ENCODE measurements at regions of chr12 and their contacts with region 1.

Region 1: DNA sequence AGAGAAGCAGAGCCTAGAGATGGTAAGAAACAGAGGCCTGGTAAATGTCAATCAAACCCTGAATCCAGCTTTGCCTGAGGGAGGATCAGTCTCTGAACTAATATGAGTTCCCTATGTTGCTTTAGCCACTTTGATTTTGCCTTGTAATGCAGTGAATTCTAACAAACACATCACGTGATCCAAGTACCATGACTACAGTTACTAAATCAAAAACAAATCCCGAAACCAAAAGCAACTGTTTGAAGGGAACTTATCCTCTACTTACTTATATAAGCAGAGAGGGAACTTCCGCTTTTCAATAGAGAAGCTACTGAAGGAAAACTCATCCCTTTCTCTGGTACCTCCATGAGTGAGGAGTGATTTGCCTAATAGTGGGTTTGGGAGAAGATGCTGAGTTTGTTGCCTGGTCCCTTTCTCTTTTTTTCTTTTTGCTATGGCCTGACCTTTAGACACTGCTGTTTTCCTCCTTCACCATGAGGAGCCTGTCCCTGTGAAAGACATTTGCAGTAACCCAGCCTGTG is 7.7 kb upstream of the PPTC7 start:
- DNase-seq: no peak
- H3K4me3 Mint-ChIP-seq: no peak overlapping the region
- H3K27ac Mint-ChIP-seq: peak overlapping the region; percentile 10
- H3K4me1 Mint-ChIP-seq: peaks cover 8% of the 10 kb centered on the region
- H3K27me3 Mint-ChIP-seq: no peaks in the 10 kb centered on the region
- CTCF ChIP-seq: no peak

Region 2: DNA sequence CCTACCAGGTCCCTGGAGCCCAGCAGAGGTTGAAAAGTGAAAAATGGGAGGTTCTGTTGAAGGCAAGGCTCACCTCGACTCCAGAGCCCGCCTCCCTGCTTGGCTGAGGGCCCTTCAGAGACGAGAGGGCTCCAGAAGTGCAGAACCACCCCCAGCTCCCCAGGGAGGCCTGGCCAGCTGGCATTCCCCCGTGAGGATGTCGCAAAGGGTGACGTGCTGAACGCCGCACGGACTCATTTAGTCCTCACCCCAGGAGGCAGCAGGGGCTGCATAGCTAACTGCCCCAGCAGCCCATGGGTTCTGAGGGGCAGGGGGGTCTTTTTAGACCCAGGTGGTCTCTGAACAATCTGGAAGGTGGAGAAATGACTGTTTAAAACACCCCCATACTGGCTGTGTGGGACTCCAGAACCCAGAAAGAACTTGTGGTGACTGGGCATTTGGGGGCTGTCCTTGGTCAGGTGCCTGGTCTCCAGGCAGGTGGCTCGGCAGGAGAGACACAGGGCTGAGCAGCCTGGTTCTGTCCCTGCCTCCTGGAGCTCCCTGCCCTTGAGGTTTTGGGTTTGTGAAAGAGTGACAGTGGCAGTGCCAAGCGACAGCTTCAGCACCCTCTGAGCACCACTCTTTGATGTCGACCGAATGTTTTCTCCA is 219.3 kb before region 1 on chr12:
- CTCF ChIA-PET with region 1: no interaction called
- POLR2A ChIA-PET with region 1: no interaction called
- intact Hi-C with region 1: no loop called
- DNase-seq: no peak
- H3K4me3 Mint-ChIP-seq: no peak overlapping the region
- H3K27ac Mint-ChIP-seq: no peak overlapping the region
- H3K4me1 Mint-ChIP-seq: no peaks in the 10 kb centered on the region
- H3K27me3 Mint-ChIP-seq: no peaks in the 10 kb centered on the region
- CTCF ChIP-seq: no peak

Region 3: GRCh38 chr12:110508071-110508586 is 82.7 kb before region 1 on chr12:
- CTCF ChIA-PET with region 1: interaction called, 10 read pairs
- POLR2A ChIA-PET with region 1: no interaction called
- intact Hi-C with region 1: no loop called
- DNase-seq: no peak
- H3K4me3 Mint-ChIP-seq: no peak overlapping the region
- H3K27ac Mint-ChIP-seq: no peak overlapping the region
- H3K4me1 Mint-ChIP-seq: no peaks in the 10 kb centered on the region
- H3K27me3 Mint-ChIP-seq: no peaks in the 10 kb centered on the region
- CTCF ChIP-seq: no peak

Region 4: DNA sequence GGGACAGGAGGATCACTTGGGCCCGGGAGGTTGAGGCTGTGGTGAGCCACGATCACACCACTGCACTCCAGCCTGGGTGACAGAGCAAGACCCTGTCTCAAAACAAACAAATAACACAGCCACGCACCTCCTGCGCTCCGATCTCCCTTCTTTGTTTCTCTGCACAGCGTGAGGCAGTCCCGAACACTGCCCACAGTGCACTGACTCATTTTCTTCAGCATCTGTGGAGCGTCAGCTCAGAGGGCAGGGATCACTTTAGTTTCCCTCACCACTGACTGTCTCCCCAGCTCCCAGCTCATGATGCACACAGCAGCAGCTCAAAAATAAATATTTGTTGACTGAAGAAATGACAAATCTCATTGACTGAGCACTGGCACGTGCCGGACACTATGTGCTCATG is 330.4 kb after region 1 on chr12:
- CTCF ChIA-PET with region 1: no interaction called
- POLR2A ChIA-PET with region 1: no interaction called
- intact Hi-C with region 1: no loop called
- DNase-seq: peak; percentile 36
- H3K4me3 Mint-ChIP-seq: no peak overlapping the region
- H3K27ac Mint-ChIP-seq: no peak overlapping the region
- H3K4me1 Mint-ChIP-seq: peaks cover 26% of the 10 kb centered on the region
- H3K27me3 Mint-ChIP-seq: no peaks in the 10 kb centered on the region
- CTCF ChIP-seq: no peak

Measured in MCF 10A (cell line).